Dorsolateral prefrontal cortex (tissue), 120 donors: ENCODE measurements at regions of chr1 and their contacts with region 1.

Region 1: DNA sequence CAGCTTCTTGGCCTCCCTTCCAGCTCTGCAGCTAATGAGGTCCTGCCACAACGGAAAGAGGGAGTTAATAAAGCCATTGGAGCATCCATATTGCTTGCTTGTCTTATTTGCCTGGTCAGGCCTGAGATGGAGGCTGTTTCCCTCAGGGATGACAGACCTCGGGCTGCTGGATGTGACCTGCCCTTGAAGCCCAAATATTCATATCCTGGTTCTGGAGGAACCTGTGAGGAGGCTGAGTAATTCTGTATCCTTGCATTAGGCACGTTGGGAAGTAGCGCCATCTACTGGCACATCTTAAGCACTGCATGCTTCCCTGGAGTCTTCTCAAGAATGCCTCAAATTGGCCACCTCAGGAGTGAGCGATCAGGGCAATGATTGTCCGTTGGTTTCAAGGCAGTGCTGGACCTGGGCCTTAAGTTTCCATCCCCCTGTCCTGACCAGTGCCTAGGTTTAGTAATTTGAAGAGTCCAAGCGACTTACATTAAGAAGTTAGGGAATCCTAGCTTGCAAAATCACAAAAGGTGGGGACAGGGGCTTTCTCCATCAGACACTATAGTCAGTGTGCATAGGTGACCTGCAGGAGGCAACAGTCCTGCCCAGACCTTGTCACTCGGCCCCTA is 13.8 kb upstream of the NASP start:
- DNase-seq: peak; percentile 52 to 87 (median 77)
- H3K4me3 ChIP-seq: no peak overlapping the region
- H3K27ac ChIP-seq: peak overlapping the region in 34 of 59 donors; percentile 5 to 79 (median 50)
- H3K27me3 ChIP-seq: no peaks in the 10 kb centered on the region
- CTCF ChIP-seq: peak; percentile 75 to 99 (median 97)

Region 2: GRCh38 chr1:45018599-45019230 is 551.4 kb before region 1 on chr1:
- intact Hi-C with region 1: loop called in 1 of 2 experiments (anchors 5 kb)
- DNase-seq: peak; percentile 42 to 88 (median 64)
- H3K4me3 ChIP-seq: peak overlapping the region in 1 of 59 donors; percentile 9
- H3K27ac ChIP-seq: peak overlapping the region in 18 of 59 donors; percentile 3 to 64 (median 29)
- H3K27me3 ChIP-seq: no peaks in the 10 kb centered on the region
- CTCF ChIP-seq: peak; percentile 47 to 85 (median 72)

Region 3: DNA sequence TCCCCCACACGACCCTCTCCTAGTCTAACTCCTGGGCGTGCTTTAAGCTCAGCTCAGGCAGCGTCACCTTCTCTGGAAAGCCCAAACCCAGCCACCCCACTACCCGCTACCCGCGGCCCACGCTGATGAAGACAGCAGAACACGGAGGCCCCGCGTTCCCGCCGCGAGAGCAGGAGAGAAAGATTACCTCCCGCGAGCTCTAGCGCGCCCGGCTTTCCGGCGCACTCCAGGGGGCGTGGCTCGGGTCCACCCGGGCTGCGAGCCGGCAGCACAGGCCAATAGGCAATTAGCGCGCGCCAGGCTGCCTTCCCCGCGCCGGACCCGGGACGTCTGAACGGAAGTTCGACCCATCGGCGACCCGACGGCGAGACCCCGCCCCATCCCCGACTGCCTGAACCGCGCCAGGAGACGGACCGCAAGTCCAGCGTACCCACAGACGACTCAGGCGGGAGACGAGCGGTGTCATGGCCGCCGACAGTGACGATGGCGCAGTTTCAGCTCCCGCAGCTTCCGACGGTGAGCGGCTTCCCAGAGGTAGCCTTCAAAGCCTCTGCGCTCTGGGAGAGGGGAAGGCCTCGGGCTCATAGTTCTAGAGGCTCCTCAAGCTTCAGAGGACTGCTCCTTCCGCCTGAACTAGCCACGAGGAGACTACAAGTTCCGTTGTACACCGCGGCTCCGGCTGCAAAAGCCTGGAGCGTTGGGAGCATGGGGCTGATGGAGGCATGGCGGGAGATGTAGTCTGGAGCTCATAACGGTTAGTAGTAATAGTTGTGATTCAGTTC is 230.1 kb before region 1 on chr1 and contains the starts of genes MUTYH and TOE1:
- intact Hi-C with region 1: loop called in 1 of 2 experiments (anchors 5 kb)
- DNase-seq: peak; percentile 80 to 92 (median 89)
- H3K4me3 ChIP-seq: peak within 1 kb of the TSS; percentile 65 to 98 (median 89)
- H3K27ac ChIP-seq: peak within 1 kb of the TSS; percentile 84 to 100 (median 97)
- H3K27me3 ChIP-seq: no peaks in the 10 kb centered on the region
- CTCF ChIP-seq: peak in 42 of 56 donors; percentile 5 to 65 (median 26)
- total RNA-seq, gene MUTYH: 18.4 to 56.7 (median 33.5) TPM
- total RNA-seq, gene TOE1: 3.3 to 10.9 (median 7.1) TPM

Region 4: GRCh38 chr1:45359882-45360513 is 210.1 kb before region 1 on chr1:
- intact Hi-C with region 1: loop called (anchors 1 to 5 kb)
- DNase-seq: peak in 9 of 10 donors; percentile 47 to 84 (median 60)
- H3K4me3 ChIP-seq: peak overlapping the region in 25 of 59 donors; percentile 1 to 48 (median 13)
- H3K27ac ChIP-seq: peak overlapping the region in 58 of 59 donors; percentile 12 to 90 (median 78)
- H3K27me3 ChIP-seq: no peaks in the 10 kb centered on the region
- CTCF ChIP-seq: peak; percentile 61 to 92 (median 86)

Region 5: GRCh38 chr1:45499415-45499769 is 70.7 kb before region 1 on chr1:
- intact Hi-C with region 1: loop called in 1 of 2 experiments (anchors 5 kb)
- DNase-seq: no peak
- H3K4me3 ChIP-seq: peak overlapping the region; percentile 39 to 92 (median 79)
- H3K27ac ChIP-seq: peak overlapping the region in 55 of 59 donors; percentile 6 to 97 (median 89)
- H3K27me3 ChIP-seq: no peaks in the 10 kb centered on the region
- CTCF ChIP-seq: no peak

Region 6: GRCh38 chr1:45512641-45513054 is 57.4 kb before region 1 on chr1:
- intact Hi-C with region 1: loop called (anchors 2 to 5 kb)
- DNase-seq: peak in 5 of 10 donors; percentile 45 to 70 (median 49)
- H3K4me3 ChIP-seq: no peak overlapping the region
- H3K27ac ChIP-seq: peak overlapping the region in 47 of 59 donors; percentile 19 to 90 (median 79)
- H3K27me3 ChIP-seq: no peaks in the 10 kb centered on the region
- CTCF ChIP-seq: peak; percentile 36 to 81 (median 68)

Region 7: GRCh38 chr1:45974541-45975269 is 404.6 kb after region 1 on chr1:
- intact Hi-C with region 1: no loop called
- DNase-seq: no peak
- H3K4me3 ChIP-seq: no peak overlapping the region
- H3K27ac ChIP-seq: no peak overlapping the region
- H3K27me3 ChIP-seq: no peaks in the 10 kb centered on the region
- CTCF ChIP-seq: no peak